AG04450 (cell line): ENCODE measurements at regions of chr19 and their contacts with region 1.

Region 1: GRCh38 chr19:46404055-46404752 is 9.2 kb downstream of the CCDC8 start:
- DNase-seq: no peak
- H3K4me3 ChIP-seq: peak overlapping the region; percentile 47
- H3K27ac ChIP-seq: peak overlapping the region; percentile 31
- H3K27me3 ChIP-seq: no peaks in the 10 kb centered on the region
- CTCF ChIP-seq: peak; percentile 44

Region 2: DNA sequence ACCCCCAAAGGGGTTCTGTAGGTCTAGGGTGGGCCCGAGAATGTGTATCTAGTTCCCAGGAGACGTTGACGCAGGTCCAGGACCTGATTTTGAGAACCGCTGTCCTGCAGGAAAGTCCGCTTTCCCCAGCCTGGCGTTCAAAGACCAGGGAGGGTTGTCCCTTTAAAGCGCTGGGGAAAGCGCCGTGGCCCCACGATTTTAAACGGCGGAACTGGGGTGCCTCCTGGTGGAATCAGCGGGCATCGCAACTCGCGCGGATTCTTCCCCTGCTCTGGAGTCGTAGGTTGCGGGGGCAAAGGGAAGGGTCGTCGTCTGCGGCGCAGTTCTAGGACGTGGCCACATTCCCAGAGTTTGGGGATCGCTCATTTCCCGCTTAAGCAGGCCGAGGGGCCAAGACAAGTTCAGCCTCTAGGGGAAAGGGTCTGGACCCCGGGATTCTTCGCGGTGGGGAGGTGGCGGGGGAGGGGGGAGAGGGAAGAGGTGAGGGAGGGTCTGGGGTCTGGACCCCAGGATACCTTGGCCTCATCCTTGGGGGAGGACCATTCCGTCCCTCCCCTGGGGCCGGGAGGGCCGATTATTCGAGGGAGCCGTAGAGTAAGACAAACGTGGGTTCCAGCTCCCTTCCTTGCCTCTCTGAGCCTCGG is 83.7 kb after region 1 on chr19:
- CTCF ChIA-PET with region 1: interaction called, 66 read pairs
- POLR2A ChIA-PET with region 1: no interaction called
- DNase-seq: no peak
- H3K4me3 ChIP-seq: peak overlapping the region; percentile 52
- H3K27ac ChIP-seq: no peak overlapping the region
- H3K27me3 ChIP-seq: peaks cover 38% of the 10 kb centered on the region
- CTCF ChIP-seq: peak; percentile 96

Region 3: DNA sequence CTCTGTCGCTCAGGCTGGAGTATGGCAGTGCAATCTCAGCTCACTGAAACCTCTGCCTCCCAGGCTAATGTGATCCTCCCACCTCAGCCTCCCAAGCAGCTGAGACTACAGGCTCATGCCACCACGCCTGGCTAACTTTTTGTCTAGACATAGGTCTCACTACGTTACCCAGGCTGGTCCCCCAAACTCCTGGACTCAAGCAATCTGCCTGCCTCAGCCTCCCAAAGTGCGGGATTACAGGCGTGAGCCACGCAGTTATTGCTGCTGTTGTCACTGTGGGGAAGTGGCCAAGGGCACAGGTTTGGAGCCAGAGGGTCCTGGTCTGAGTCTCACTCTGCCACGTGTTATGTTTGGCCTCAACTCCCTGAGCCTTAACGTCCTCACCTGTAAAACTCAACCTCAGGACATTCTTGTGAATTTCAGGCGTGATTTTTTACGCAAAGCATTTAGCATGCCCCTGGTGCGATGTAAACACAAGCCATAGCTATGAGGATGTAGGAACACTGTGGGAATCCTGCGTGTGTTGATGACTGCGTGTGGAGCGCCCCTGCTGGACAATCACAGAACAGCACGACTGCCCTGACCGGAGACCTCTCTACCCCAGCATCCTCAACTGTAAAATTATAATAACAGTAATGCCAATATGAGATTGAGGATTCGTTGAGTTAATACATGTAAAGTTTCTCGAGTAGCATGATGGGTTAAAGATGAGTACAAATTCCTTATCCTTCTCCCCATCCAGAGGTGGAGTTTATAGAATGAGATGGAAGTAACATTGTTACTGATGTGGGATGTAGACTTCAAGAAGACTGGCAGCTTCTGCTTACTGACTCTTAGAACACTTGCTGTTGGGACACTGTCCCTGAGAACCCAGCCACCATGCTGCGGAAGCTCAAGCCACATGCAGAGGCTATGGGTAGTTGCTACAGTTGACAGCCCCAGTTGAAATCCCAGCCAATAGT is 133.2 kb after region 1 on chr19:
- CTCF ChIA-PET with region 1: interaction called, 11 read pairs
- POLR2A ChIA-PET with region 1: no interaction called
- DNase-seq: no peak
- H3K4me3 ChIP-seq: no peak overlapping the region
- H3K27ac ChIP-seq: no peak overlapping the region
- H3K27me3 ChIP-seq: peaks cover 18% of the 10 kb centered on the region
- CTCF ChIP-seq: peak; percentile 91

Region 4: DNA sequence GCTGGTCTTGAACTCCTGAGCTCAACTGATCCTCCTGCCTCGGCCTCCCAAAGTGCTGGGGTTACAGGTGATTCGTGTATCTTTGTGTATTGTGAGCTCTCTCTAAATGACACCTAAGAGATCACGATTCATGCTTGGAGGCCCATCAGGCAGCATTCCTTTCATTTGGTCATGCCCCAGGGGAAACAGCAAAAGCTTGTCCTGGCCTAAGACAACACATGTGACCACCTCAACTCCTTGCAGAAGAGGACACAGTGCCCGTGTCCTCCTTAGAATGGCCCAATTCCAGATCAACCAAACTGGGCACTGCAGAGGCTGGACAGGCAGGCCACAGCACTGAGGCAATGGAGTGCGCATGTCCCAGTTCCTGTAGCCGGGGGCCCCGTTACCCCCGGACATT is 676.9 kb after region 1 on chr19:
- CTCF ChIA-PET with region 1: no interaction called
- POLR2A ChIA-PET with region 1: no interaction called
- DNase-seq: no peak
- H3K4me3 ChIP-seq: no peak overlapping the region
- H3K27ac ChIP-seq: no peak overlapping the region
- H3K27me3 ChIP-seq: no peaks in the 10 kb centered on the region
- CTCF ChIP-seq: no peak